CD4-positive, alpha-beta T cell (primary cell): ENCODE measurements at regions of chr17 and their contacts with region 1.

Region 1: DNA sequence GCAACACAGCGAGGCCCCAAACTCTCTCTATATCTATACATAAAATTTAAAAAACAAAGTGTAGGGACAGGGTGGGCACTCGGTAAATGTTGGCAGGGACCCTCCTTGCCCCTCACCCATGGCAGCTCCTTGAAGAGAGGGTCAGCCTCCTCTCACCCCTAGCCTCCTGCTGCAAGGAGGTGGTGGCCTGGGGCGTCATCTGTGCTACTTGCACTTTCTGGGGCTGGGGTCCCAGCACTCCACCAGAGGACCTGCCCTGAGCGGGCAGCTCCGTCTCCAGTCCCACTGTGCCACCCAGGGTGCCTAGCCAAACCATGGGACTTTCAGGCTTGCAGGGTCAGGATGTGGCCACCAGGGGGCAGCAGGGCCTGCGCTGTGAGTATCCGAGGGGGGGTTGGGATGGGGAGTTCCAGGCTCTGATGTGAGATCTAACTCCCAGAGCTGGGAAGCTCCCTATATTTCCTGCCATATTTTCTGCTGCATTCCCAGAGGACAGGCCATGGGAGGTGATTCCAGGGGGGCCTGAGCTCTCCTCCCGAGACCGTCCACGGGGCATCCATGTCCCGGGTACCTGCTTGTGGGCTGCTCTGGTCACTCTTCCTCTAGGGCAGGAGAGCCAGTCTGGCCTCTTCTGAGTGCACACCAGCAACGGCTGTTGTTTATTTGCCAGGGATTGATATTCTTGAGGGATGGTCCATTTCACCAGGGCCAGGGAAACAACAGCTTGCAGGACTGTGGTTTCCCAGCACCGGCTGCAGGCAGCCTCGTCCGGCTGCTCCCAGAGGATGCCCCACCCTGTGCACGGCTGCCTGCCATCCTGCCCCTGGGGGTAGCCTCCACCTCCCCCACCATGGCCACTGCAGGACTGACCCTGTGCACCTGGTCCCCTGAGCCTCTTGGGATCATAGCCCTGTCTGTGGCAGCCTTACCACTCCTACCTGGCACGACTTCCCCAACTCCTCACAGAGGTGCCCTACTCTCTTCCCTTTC is 1.1 kb downstream of the GPR142 start:
- DNase-seq: peak; percentile 48 to 87 (median 70)
- ATAC-seq: peak; percentile 65
- H3K4me3 ChIP-seq: peak overlapping the region; percentile 30
- H3K4me3 Mint-ChIP-seq: no peak overlapping the region
- H3K27ac ChIP-seq: no peak overlapping the region
- H3K27ac Mint-ChIP-seq: no peak overlapping the region
- H3K4me1 ChIP-seq: peaks cover 19% of the 10 kb centered on the region
- H3K4me1 Mint-ChIP-seq: peaks cover 14% of the 10 kb centered on the region
- H3K27me3 ChIP-seq: no peaks in the 10 kb centered on the region
- H3K27me3 Mint-ChIP-seq: peaks cover 7% of the 10 kb centered on the region
- CTCF ChIP-seq: peak; percentile 91

Region 2: GRCh38 chr17:74212913-74213791 is 155.2 kb before region 1 on chr17 and contains the start of gene TTYH2:
- CTCF ChIA-PET with region 1: no interaction called
- POLR2A ChIA-PET with region 1: interaction called, 5 read pairs
- intact Hi-C with region 1: loop called in 1 of 2 experiments (anchors 5 kb)
- DNase-seq: peak; percentile 45 to 88 (median 65)
- ATAC-seq: peak; percentile 69
- H3K4me3 ChIP-seq: peak within 1 kb of the TSS; percentile 64
- H3K4me3 Mint-ChIP-seq: peak within 1 kb of the TSS; percentile 89
- H3K27ac ChIP-seq: peak within 1 kb of the TSS; percentile 30 to 42
- H3K27ac Mint-ChIP-seq: peak within 1 kb of the TSS; percentile 74
- H3K4me1 ChIP-seq: peaks cover 69% of the 10 kb centered on the region
- H3K4me1 Mint-ChIP-seq: peaks cover 49% of the 10 kb centered on the region
- H3K27me3 ChIP-seq: no peaks in the 10 kb centered on the region
- H3K27me3 Mint-ChIP-seq: no peaks in the 10 kb centered on the region
- CTCF ChIP-seq: peak; percentile 37
- total RNA-seq, gene TTYH2: 4.4 to 5.4 TPM

Region 3: GRCh38 chr17:74379495-74380085 is 11.2 kb after region 1 on chr17:
- CTCF ChIA-PET with region 1: interaction called, 22 read pairs
- POLR2A ChIA-PET with region 1: interaction called, 4 read pairs
- intact Hi-C with region 1: no loop called
- DNase-seq: peak; percentile 84 to 95 (median 90)
- ATAC-seq: peak; percentile 92
- H3K4me3 ChIP-seq: peak overlapping the region; percentile 16
- H3K4me3 Mint-ChIP-seq: no peak overlapping the region
- H3K27ac ChIP-seq: no peak overlapping the region
- H3K27ac Mint-ChIP-seq: no peak overlapping the region
- H3K4me1 ChIP-seq: peaks cover 13% of the 10 kb centered on the region
- H3K4me1 Mint-ChIP-seq: no peaks in the 10 kb centered on the region
- H3K27me3 ChIP-seq: no peaks in the 10 kb centered on the region
- H3K27me3 Mint-ChIP-seq: no peaks in the 10 kb centered on the region
- CTCF ChIP-seq: peak; percentile 87

Region 4: GRCh38 chr17:74427048-74427762 is 58.8 kb after region 1 on chr17:
- CTCF ChIA-PET with region 1: no interaction called
- POLR2A ChIA-PET with region 1: no interaction called
- intact Hi-C with region 1: no loop called
- DNase-seq: no peak
- ATAC-seq: no peak
- H3K4me3 ChIP-seq: no peak overlapping the region
- H3K4me3 Mint-ChIP-seq: no peak overlapping the region
- H3K27ac ChIP-seq: no peak overlapping the region
- H3K27ac Mint-ChIP-seq: no peak overlapping the region
- H3K4me1 ChIP-seq: peaks cover 22% of the 10 kb centered on the region
- H3K4me1 Mint-ChIP-seq: no peaks in the 10 kb centered on the region
- H3K27me3 ChIP-seq: peaks cover 27 to 28% of the 10 kb centered on the region in 2 experiments
- H3K27me3 Mint-ChIP-seq: peaks cover 65% of the 10 kb centered on the region
- CTCF ChIP-seq: no peak

Region 5: DNA sequence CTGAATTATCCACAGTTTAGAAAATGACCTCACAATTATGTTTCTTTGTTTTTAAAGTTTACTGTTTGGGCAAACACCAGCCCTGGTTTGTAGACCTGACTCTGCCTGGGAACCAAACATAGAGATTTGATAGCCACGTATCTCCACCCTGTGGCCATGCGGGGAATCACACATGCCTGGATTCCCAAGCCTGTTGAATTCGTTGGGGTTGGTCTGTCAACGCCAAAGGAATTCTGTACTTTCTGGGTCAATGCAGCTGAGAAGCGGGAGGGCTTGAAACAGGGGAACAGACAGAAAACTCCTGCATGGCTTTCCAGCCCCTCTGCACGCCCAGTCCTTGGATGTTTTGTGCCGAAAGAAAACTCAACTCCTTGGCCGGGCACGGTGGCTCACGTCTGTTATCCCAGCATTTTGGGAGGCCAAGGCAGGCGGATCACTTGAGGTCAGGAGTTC is 125.0 kb after region 1 on chr17:
- CTCF ChIA-PET with region 1: interaction called, 4 read pairs
- POLR2A ChIA-PET with region 1: no interaction called
- intact Hi-C with region 1: loop called (anchors 1 to 2 kb)
- DNase-seq: peak; percentile 48 to 83 (median 66)
- ATAC-seq: peak; percentile 78
- H3K4me3 ChIP-seq: no peak overlapping the region
- H3K4me3 Mint-ChIP-seq: no peak overlapping the region
- H3K27ac ChIP-seq: no peak overlapping the region
- H3K27ac Mint-ChIP-seq: no peak overlapping the region
- H3K4me1 ChIP-seq: peaks cover 3% of the 10 kb centered on the region
- H3K4me1 Mint-ChIP-seq: peaks cover 7% of the 10 kb centered on the region
- H3K27me3 ChIP-seq: peaks cover 0 to 3% of the 10 kb centered on the region in 2 experiments
- H3K27me3 Mint-ChIP-seq: peaks cover 6% of the 10 kb centered on the region
- CTCF ChIP-seq: peak; percentile 90

Region 6: DNA sequence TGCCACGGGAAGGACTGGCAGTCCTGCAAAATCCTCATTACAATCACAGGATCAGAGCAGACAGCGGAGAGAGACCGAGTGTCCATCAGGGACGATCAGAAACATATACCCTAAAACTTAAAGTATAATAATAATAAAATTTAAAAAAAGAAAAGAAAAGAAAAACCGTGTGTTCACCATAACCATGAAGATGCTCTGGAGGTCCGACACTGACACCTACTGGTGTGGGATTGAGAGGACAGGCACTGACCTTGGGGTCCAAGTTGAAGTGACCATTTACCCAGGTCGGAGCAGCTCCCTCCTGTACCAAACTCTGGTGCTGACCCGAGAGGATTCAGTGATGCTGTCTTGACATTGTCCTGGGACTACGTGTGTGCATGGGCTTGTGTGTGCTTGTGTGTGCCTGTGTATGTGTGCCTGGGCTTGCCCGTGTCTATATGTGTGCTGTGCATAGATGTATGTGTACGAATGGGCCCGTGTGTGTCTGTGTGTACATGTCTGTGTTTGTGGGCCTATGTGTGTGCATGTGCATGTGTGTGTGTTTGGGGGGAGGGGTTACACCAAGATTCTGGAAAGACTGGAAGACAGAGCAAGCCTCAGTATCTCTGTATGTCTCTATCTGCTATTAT is 233.7 kb after region 1 on chr17:
- CTCF ChIA-PET with region 1: no interaction called
- POLR2A ChIA-PET with region 1: no interaction called
- intact Hi-C with region 1: loop called in 1 of 2 experiments (anchors 1 kb)
- DNase-seq: peak in 8 of 14 experiments; percentile 6 to 57 (median 22)
- ATAC-seq: no peak
- H3K4me3 ChIP-seq: no peak overlapping the region
- H3K4me3 Mint-ChIP-seq: no peak overlapping the region
- H3K27ac ChIP-seq: no peak overlapping the region
- H3K27ac Mint-ChIP-seq: no peak overlapping the region
- H3K4me1 ChIP-seq: peaks cover 17% of the 10 kb centered on the region
- H3K4me1 Mint-ChIP-seq: peaks cover 41% of the 10 kb centered on the region
- H3K27me3 ChIP-seq: peaks cover 0 to 13% of the 10 kb centered on the region in 2 experiments
- H3K27me3 Mint-ChIP-seq: peaks cover 9% of the 10 kb centered on the region
- CTCF ChIP-seq: peak; percentile 71